ENCODE measurements at regions of chr1 and their contacts with region 1.

Region 1: GRCh38 chr1:247078261-247079140 is at the start of gene ZNF670:
- DNase-seq: peak; percentile 94
- ATAC-seq: peak; percentile 99
- H3K4me3 ChIP-seq: peak within 1 kb of the TSS; percentile 64 to 90
- H3K27ac ChIP-seq: peak within 1 kb of the TSS; percentile 61
- H3K4me1 ChIP-seq: peaks cover 0 to 15% of the 10 kb centered on the region in 2 experiments; a peak in 2 of 4 replicates
- H3K27me3 ChIP-seq: no peaks in the 10 kb centered on the region
- CTCF ChIP-seq: 0 out of 6 replicates have a peak, but pooled peaks of 1 of the 3 experiments have one; percentile 17
- POLR2A ChIP-seq: peak; percentile 73
- RAD21 ChIP-seq: peak; percentile 45
- total RNA-seq, gene ZNF670: 6.9 TPM

Region 2: GRCh38 chr1:246809473-246809872 is 269.0 kb before region 1 on chr1:
- CTCF ChIA-PET with region 1: no interaction called
- POLR2A ChIA-PET with region 1: no interaction called
- RAD21 ChIA-PET with region 1: no interaction called
- intact Hi-C with region 1: loop called (anchors 10 kb)
- DNase-seq: no peak
- ATAC-seq: peak; percentile 75
- H3K4me3 ChIP-seq: no peak overlapping the region
- H3K27ac ChIP-seq: no peak overlapping the region
- H3K4me1 ChIP-seq: no peaks in the 10 kb centered on the region
- H3K27me3 ChIP-seq: no peaks in the 10 kb centered on the region
- CTCF ChIP-seq: peak in 2 of 3 experiments; percentile 21 to 28; a peak in 2 of 6 replicates
- POLR2A ChIP-seq: no peak
- RAD21 ChIP-seq: peak; percentile 14; the same call in 1 of the 2 replicates

Region 3: DNA sequence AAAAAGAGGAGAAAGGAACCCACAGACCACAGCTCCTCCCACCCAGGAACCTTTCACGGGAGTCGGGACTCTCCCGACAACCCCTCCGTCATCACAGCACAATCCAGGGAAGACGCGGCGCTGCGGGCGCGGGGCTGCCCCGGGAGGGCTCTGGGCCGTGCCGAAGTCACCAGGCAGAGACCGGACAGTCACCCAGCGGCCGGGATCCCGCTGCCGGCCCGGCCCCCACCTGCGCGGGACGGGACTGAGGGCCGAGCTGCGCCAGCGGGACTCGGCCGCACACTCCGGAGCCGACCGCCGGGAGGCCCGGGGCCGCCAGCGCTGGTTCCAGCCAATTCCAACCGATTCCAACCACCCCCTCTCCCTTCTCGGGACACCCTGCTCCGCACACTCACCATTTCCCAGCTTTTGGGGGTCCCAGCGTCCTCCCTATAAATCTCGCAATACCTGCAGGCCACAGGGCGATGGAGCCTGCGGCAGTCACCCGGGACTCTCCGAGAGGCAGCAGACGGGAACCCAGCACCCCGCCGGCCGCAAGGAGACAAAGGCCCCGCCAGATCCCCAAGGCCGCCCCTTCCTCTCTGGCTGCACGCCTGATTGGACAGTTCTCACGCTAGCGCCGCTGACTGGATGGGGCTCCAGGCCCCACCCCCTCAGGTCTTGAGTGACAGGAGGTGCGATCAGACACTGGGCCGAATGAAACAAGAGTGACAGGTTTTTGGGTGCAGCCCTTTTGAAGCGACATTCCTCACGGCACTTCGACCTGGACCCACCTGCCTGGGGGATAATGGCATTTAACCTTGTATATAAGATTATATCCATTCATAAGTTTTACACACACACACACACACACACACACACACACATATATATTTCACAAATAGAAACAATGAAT is 70.7 kb before region 1 on chr1 and contains the start of gene ZNF695:
- CTCF ChIA-PET with region 1: interaction called, 3 read pairs
- POLR2A ChIA-PET with region 1: no interaction called
- RAD21 ChIA-PET with region 1: no interaction called
- intact Hi-C with region 1: loop called (anchors 5 kb)
- DNase-seq: peak; percentile 97
- ATAC-seq: peak; percentile 98
- H3K4me3 ChIP-seq: peak within 1 kb of the TSS; percentile 82 to 91
- H3K27ac ChIP-seq: peak within 1 kb of the TSS; percentile 84
- H3K4me1 ChIP-seq: peaks cover 7 to 10% of the 10 kb centered on the region in 2 experiments
- H3K27me3 ChIP-seq: no peaks in the 10 kb centered on the region
- CTCF ChIP-seq: no peak
- POLR2A ChIP-seq: peak; percentile 91
- RAD21 ChIP-seq: no peak
- total RNA-seq, gene ZNF695: 14.9 TPM

Region 4: DNA sequence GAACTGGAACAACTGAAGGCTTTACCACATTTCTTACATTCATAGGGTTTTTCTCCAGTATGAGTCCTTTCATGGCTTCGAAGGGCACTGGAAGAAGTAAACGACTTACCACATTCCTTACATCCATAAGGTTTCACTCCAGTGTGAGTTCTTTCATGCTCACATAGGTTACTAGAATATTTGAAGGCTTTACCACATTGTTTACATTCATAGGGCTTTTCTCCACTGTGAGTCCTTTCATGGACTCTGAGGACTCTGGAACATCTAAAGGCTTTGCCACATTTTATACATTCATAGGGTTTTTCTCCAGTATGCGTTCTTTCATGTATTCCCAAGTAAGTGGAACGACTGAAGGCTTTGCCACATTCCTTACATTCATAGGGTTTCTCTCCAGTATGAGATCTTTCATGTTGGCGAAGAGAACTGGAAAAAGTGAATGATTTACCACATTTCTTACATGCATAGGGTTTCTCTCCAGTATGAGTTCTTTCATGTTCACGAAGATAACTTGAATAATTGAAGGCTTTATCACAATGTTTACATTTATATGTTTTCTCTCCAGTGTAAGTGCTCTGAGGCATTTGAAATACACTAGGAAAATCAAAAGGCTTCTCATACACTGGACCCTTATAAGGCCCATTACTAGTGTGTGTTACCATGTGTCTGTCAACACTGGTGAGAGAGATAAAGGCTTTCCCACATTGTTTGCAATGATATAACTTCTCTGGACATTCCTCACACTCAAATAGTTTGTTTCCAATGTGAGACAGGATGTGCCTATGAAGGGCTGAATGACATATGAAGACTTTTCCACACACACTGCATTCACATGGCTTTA is 40.8 kb before region 1 on chr1:
- CTCF ChIA-PET with region 1: no interaction called
- POLR2A ChIA-PET with region 1: no interaction called
- RAD21 ChIA-PET with region 1: no interaction called
- intact Hi-C with region 1: no loop called
- DNase-seq: no peak
- ATAC-seq: no peak
- H3K4me3 ChIP-seq: no peak overlapping the region
- H3K27ac ChIP-seq: no peak overlapping the region
- H3K4me1 ChIP-seq: no peaks in the 10 kb centered on the region
- H3K27me3 ChIP-seq: no peaks in the 10 kb centered on the region
- CTCF ChIP-seq: no peak
- POLR2A ChIP-seq: no peak
- RAD21 ChIP-seq: no peak

Region 5: DNA sequence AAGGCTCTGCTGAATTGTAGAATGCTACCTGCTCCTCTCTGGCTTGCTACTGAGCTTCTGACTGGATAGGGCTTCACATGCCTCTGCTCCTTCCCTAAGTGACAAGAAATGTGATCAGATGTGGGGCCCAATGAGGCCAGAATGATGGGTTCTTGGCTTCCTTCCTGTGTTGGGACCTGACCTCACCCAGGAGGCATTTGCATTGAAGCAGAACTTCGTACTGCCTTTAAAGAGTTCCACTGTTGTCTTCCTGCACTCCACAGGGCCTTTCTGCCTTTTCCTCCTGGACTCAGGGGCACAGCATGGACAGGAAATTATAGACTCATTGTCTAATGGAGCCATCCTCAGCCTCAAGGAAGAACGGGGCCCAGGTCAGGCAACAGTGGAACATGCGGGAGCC is 14.2 kb before region 1 on chr1:
- CTCF ChIA-PET with region 1: no interaction called
- POLR2A ChIA-PET with region 1: no interaction called
- RAD21 ChIA-PET with region 1: no interaction called
- intact Hi-C with region 1: no loop called
- DNase-seq: no peak
- ATAC-seq: no peak
- H3K4me3 ChIP-seq: no peak overlapping the region
- H3K27ac ChIP-seq: no peak overlapping the region
- H3K4me1 ChIP-seq: no peaks in the 10 kb centered on the region
- H3K27me3 ChIP-seq: no peaks in the 10 kb centered on the region
- CTCF ChIP-seq: no peak
- POLR2A ChIP-seq: no peak
- RAD21 ChIP-seq: no peak

Region 6: DNA sequence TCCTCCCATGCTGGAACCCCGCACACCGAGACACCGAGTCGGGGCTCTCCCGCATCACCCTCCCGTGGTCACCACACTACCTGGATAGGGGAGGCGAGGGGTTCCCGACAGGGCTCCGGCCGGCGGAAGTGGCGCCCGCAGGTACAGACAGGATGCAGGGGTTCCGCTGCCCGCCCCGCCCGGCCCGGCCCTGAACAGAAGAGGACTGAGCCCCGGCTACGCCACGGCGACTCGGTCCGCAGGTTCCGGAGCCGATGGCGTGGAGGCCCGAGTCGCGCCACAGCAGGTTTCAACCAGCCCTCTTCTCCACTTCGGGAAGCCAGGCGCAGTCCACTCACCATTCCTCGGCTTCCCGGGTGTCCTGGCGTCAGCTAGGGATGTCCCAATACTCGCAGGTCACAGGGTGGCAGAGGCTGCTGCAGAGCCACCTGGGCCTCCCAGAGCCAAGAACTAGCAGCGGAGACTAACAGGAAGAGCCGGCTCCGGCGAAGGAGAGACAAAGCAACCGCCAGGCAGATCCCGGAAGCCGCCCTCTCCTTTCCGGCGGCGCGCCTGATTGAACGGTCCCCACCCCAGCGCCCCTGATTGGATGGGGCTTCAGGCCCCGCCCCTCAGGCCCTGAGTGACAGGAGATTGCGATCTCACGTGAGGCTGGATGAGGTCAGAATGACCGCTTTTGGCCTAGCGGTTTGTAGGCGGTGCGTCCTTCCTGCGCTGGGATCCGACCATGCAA is 25.5 kb after region 1 on chr1 and contains the start of gene ZNF669:
- CTCF ChIA-PET with region 1: no interaction called
- POLR2A ChIA-PET with region 1: no interaction called
- RAD21 ChIA-PET with region 1: no interaction called
- intact Hi-C with region 1: loop called (anchors 2 kb)
- DNase-seq: peak; percentile 92
- ATAC-seq: peak; percentile 97
- H3K4me3 ChIP-seq: peak within 1 kb of the TSS; percentile 91 to 93
- H3K27ac ChIP-seq: peak within 1 kb of the TSS; percentile 84
- H3K4me1 ChIP-seq: peaks cover 5 to 10% of the 10 kb centered on the region in 2 experiments; a peak in 2 of 4 replicates
- H3K27me3 ChIP-seq: no peaks in the 10 kb centered on the region
- CTCF ChIP-seq: no peak
- POLR2A ChIP-seq: peak; percentile 72
- RAD21 ChIP-seq: no peak
- total RNA-seq, gene ZNF669: 7.2 TPM

Region 7: DNA sequence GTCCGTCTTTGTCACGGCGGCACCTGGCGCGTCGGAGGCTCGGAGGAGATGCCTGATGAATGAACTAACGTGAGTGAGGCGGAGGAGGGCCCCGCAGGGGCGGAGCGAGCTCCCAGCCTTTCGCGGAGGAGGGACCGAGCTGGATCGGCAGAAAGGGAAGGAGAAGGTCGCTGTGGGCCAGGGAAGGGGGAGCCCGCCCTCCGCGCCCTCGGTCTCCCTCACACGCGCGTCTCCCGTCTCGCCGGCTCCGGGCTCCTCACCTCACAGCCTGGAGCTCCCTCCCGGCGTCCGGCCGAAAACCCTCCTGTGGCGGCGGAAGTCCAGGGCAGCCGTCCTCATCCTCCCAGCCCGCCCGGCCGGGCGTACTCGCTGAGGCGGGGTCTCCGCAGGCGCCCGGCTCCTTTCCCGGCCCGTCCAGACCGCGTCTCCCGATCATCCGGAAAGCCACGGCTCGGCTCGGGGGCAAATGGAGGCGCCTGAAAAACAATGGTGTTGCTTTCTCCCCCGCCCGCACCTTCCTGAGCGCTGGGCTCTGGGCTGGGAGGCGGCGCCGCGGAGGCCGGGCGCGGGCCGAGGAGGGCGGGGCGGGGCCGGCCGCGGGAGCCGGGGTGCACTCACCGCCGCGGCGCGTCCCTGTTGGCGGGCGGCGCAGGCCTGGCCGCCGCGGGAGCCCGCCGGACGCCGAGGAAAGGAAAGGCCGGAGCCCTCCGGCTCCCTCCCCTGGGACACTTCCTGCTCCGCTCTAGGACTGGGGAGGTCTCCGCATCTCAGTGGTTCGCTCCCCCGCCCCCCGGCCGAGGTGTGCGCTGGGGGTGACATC is 252.9 kb after region 1 on chr1 and contains the start of gene ZNF496:
- CTCF ChIA-PET with region 1: no interaction called
- POLR2A ChIA-PET with region 1: no interaction called
- RAD21 ChIA-PET with region 1: no interaction called
- intact Hi-C with region 1: no loop called
- DNase-seq: peak; percentile 74
- ATAC-seq: peak; percentile 83
- H3K4me3 ChIP-seq: peak within 1 kb of the TSS; percentile 86 to 93
- H3K27ac ChIP-seq: peak within 1 kb of the TSS; percentile 94
- H3K4me1 ChIP-seq: peaks cover 15 to 30% of the 10 kb centered on the region in 2 experiments
- H3K27me3 ChIP-seq: no peaks in the 10 kb centered on the region
- CTCF ChIP-seq: no peak
- POLR2A ChIP-seq: no peak
- RAD21 ChIP-seq: no peak
- total RNA-seq, gene ZNF496: 37.4 TPM